ENCODE measurements at regions of chr9 and their contacts with region 1.

Region 1: DNA sequence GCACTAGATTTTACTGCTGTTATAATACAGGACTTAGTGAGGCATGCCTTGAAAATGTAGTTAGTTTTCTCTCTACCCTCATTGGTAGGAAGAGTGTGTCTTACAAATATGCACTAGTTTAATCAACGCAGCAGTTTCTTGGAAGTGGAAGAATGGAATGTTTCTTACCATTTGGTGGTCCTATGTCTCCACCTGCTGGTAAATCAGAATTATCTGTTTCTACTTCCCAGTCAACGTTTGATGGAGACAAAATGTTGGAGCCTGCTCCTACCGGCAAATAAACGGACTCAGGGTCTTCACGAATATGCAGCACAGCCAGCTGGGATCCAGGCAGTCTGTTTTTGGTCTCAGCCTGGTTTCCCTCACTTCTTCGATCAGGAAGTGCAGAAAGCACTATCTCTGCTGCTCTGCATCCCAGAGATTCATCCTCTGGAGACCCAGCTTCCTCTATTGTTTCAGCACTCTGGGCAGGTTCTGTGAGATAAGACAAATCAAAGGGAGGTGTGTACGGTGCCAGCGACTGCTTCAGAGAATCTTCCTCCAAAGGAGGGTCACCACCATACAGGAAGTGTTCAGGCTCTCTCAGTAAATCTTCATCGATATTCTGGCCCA is 59.5 kb upstream of the PCA3 start:
- H3K4me3 Mint-ChIP-seq: no peak overlapping the region
- H3K27ac Mint-ChIP-seq: no peak overlapping the region
- H3K4me1 Mint-ChIP-seq: peaks cover 5% of the 10 kb centered on the region
- H3K27me3 Mint-ChIP-seq: peaks cover 25% of the 10 kb centered on the region

Region 2: GRCh38 chr9:76403352-76403751 is 301.3 kb before region 1 on chr9:
- intact Hi-C with region 1: loop called (anchors 1 kb)
- H3K4me3 Mint-ChIP-seq: peak overlapping the region; percentile 20
- H3K27ac Mint-ChIP-seq: peak overlapping the region; percentile 60
- H3K4me1 Mint-ChIP-seq: peaks cover 18% of the 10 kb centered on the region
- H3K27me3 Mint-ChIP-seq: no peaks in the 10 kb centered on the region

Region 3: DNA sequence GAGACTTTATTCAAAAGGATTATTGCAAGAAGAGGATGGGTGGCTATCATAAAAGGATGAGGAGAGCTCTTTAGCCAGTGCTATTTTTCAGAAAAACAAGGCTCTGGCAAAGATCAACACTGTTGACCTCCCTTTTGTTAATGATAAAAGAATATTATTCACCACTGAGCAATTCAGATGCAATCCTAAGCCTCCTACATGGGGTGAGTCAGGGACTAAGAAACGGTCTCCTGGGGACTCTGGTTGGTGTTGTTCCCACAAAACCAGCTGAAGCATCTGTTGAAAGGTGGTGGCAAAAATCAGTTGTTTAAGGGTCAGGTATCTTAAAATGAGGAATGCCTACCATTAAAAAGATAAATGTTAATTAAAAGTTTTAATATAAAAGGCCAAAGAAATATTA is 253.5 kb before region 1 on chr9:
- intact Hi-C with region 1: loop called (anchors 1 kb)
- H3K4me3 Mint-ChIP-seq: no peak overlapping the region
- H3K27ac Mint-ChIP-seq: no peak overlapping the region
- H3K4me1 Mint-ChIP-seq: peaks cover 17% of the 10 kb centered on the region
- H3K27me3 Mint-ChIP-seq: no peaks in the 10 kb centered on the region

Region 4: DNA sequence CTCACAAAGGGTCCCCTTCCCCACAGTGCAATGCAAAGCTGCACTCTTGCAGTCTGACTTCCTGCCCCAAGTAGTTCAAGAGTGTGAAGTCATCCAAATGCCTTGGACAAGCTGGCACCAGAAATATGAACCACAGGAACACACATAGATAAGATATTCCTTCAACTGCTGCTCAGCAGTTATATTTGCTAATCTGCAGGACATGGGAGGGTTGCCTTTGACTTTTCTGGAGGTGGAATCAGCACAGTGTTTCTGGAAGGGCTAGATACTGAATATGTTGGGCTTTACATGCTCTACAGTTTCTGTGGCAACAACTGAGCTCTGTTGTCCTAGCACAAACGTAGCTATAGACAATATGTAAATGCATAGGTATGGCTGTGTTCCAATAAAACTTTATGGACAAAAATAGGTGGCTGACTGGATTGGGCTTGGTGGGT is 37.2 kb before region 1 on chr9:
- intact Hi-C with region 1: loop called (anchors 1 kb)
- H3K4me3 Mint-ChIP-seq: no peak overlapping the region
- H3K27ac Mint-ChIP-seq: no peak overlapping the region
- H3K4me1 Mint-ChIP-seq: peaks cover 6% of the 10 kb centered on the region
- H3K27me3 Mint-ChIP-seq: peaks cover 2% of the 10 kb centered on the region